CD14-positive monocyte (primary cell): ENCODE measurements at regions of chr6 and their contacts with region 1.

Region 1: GRCh38 chr6:35057449-35058357 is 83.4 kb downstream of the TCP11 start:
- DNase-seq: no peak
- H3K4me3 ChIP-seq: no peak overlapping the region
- H3K4me3 Mint-ChIP-seq: no peak overlapping the region
- H3K27ac ChIP-seq: no peak overlapping the region
- H3K27ac Mint-ChIP-seq: peak overlapping the region in 1 of 7 donors; percentile 25
- H3K4me1 ChIP-seq: peaks cover 0 to 5% of the 10 kb centered on the region in 2 donors
- H3K4me1 Mint-ChIP-seq: peaks cover 6% of the 10 kb centered on the region
- H3K27me3 ChIP-seq: no peaks in the 10 kb centered on the region
- H3K27me3 Mint-ChIP-seq: peaks cover 0 to 2% (median 2%) of the 10 kb centered on the region in 3 donors
- CTCF ChIP-seq: no peak

Region 2: GRCh38 chr6:35024551-35025054 is 33.1 kb before region 1 on chr6:
- intact Hi-C with region 1: loop called in 1 of 2 experiments (anchors 5 kb)
- DNase-seq: peak; percentile 51 to 60 (median 58)
- H3K4me3 ChIP-seq: no peak overlapping the region
- H3K4me3 Mint-ChIP-seq: no peak overlapping the region
- H3K27ac ChIP-seq: peak overlapping the region in 1 of 2 donors; percentile 17
- H3K27ac Mint-ChIP-seq: peak overlapping the region in 5 of 7 donors; percentile 19 to 78 (median 28)
- H3K4me1 ChIP-seq: no peaks in the 10 kb centered on the region
- H3K4me1 Mint-ChIP-seq: peaks cover 16% of the 10 kb centered on the region
- H3K27me3 ChIP-seq: no peaks in the 10 kb centered on the region
- H3K27me3 Mint-ChIP-seq: no peaks in the 10 kb centered on the region
- CTCF ChIP-seq: no peak

Region 3: DNA sequence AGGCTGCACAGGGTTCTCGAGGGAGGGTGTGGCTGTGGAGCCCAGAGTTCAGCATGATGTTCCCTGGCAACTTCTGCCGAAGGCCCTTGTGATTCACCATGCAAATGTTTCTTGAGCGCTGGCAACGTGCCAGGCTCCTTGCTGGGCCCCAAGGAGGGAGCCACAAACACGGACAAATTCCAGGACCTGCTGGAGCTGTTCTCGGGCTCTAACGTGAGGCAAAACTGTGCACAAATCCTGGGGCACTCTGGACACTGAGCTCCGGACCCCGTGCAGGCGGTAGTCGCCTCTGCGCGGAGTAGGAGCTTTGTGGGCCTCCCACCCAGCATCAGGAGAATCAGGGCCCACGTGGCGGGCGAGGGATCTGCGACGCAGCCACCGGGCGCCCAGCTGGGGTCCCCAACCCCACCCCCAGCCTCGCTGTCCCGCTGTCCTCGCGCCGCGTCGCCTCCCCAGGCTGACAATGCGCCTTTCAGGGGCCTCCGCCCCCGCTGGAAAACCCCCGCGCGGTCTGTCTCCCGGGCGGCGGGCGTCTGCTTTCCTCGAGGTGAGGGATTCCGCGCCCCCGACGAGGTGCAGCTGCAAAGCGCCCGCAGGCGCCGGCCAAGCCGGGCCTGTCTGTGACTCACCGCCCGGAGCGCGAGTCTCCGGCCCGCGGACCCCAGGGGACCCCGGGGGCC is 124.4 kb after region 1 on chr6:
- intact Hi-C with region 1: no loop called
- DNase-seq: no peak
- H3K4me3 ChIP-seq: no peak overlapping the region
- H3K4me3 Mint-ChIP-seq: no peak overlapping the region
- H3K27ac ChIP-seq: no peak overlapping the region
- H3K27ac Mint-ChIP-seq: no peak overlapping the region
- H3K4me1 ChIP-seq: no peaks in the 10 kb centered on the region
- H3K4me1 Mint-ChIP-seq: peaks cover 2% of the 10 kb centered on the region
- H3K27me3 ChIP-seq: peaks cover 0 to 9% of the 10 kb centered on the region in 2 donors
- H3K27me3 Mint-ChIP-seq: peaks cover 11 to 21% (median 12%) of the 10 kb centered on the region in 3 donors
- CTCF ChIP-seq: no peak